PC-9 (cell line): ENCODE measurements at regions of chr11 and their contacts with region 1.

Region 1: DNA sequence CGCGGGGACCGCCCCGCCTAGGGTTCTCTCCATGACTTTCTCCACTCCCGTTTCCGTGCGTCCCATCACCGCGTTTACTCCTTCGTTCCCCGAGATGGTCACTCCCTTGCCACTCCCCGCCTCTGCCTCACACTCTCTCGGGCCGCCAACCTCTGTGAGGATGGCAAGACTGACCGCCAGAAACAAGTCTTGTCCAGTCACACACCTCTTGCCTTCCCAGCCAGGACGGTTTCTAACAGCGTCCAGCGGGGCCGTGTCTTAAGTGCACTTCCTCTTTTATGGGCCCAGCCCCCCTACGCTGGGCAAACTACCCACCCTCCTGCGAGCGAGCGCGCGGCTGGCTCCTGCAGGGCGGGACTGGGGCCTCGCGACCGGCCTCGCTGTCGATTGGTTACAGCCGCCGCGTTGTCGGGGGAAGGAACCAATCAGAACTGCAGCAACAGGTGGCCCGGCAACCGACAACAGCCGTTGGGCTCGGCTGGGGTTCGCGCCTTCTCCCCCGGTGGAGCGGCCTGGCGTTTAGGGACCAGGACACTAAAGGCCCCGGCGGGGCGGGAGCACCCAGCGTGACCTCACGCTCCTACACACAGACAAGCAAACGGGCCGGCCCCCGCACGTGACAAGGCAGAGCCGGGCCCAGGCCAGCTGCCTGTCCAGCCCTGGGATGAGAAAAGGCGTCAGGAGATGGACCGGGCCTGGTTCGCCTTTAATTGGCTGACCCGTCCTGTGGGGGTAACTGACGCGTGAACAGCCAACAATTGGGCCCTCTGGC is 512 bp upstream of the UCP2 start:
- DNase-seq: peak; percentile 90 to 96
- H3K4me3 ChIP-seq: peak overlapping the region; percentile 70
- H3K27ac ChIP-seq: peak overlapping the region; percentile 73
- H3K4me1 ChIP-seq: peaks cover 36% of the 10 kb centered on the region
- H3K27me3 ChIP-seq: no peaks in the 10 kb centered on the region
- CTCF ChIP-seq: no peak

Region 2: DNA sequence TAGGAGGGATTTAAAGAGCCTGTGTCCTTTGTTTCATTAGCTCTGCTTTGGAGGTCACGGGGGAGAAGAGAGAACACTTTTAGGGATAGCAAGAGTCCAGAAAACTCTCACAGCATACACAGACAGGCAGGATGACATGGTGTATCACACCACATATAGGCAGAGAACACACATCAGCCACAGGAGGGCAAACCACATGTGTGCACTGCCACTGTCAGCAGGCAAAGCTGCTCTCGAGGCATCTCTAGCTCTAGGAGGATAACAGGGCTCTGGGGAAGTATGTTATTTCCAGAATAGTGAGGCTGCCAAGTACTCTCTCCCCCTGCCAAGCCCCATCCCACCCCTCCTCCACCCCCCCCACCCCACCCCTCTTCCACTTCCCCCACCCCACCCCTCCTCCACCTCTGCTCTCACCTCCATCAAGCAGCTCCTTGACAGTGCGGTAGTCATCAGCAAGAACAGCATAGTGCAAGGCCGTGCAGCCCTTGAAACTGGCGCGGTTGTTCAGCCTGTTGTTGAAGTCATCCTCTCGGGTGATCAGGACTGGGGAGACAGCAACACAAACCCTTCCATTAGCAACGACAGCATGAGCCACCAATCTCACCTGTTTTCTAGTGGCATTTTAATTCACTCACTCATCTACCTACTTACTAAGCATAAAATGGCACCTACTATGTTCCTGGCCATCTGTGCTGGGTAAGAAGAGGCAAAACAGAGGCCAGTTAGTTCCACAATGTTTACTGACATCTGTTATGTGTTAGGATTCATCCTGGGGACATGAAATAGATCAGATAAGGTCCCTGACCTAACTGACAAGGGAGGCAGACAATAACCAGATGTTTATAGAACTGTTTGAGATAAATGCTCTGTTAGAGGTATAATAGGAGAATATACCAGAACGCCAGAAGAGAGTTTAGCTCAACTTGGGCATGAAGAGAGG is 1624.4 kb before region 1 on chr11:
- CTCF ChIA-PET with region 1: no interaction called
- POLR2A ChIA-PET with region 1: no interaction called
- intact Hi-C with region 1: no loop called
- DNase-seq: no peak
- H3K4me3 ChIP-seq: no peak overlapping the region
- H3K27ac ChIP-seq: no peak overlapping the region
- H3K4me1 ChIP-seq: no peaks in the 10 kb centered on the region
- H3K27me3 ChIP-seq: no peaks in the 10 kb centered on the region
- CTCF ChIP-seq: no peak

Region 3: GRCh38 chr11:74024261-74025029 is 41.3 kb after region 1 on chr11:
- CTCF ChIA-PET with region 1: no interaction called
- POLR2A ChIA-PET with region 1: interaction called, 18 read pairs
- intact Hi-C with region 1: loop called (anchors 5 kb)
- DNase-seq: no peak
- H3K4me3 ChIP-seq: no peak overlapping the region
- H3K27ac ChIP-seq: peak overlapping the region; percentile 68
- H3K4me1 ChIP-seq: peaks cover 52% of the 10 kb centered on the region
- H3K27me3 ChIP-seq: no peaks in the 10 kb centered on the region
- CTCF ChIP-seq: no peak

Region 4: DNA sequence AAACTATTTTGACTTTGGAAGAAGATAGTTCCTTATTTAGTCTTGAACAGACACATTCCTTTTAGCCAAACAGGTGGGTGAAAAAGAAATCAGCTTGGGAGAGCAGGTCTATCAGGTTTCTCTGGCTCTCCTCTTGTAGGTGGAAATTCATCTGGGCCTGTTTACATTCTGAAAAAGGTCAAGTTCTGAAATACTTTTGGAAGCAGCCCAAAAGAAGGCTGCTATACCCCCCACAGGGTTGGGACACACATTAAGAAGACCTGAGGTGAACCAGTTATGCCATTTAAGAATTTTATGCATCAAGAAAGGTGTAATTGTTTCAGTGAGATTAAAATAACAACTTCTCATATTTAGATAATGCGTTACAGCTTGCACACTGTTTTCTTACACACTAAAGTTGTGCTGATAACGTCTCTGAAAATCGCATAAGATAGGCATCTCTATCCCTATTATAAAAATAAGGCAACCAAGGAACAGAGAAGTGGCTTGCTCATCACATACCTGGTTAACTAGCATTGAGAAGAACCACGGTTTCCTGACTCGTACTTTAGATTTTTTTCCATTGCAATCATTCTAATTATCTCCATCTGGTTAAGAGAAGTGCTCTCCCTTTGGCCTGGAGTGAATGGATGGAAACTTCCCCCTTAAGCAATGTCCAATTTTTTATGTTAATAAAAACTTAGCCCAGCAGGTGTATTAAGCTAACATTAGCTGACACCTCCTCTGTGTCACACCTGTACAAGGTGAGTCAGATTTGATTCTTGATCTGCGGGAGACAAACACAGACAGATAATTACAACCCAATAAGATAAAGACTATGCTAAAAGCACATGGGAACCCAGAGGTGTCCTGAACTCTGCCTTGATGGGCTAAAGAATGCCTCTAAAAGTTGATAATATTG is 86.2 kb after region 1 on chr11:
- CTCF ChIA-PET with region 1: no interaction called
- POLR2A ChIA-PET with region 1: interaction called, 9 read pairs
- intact Hi-C with region 1: loop called (anchors 1 kb)
- DNase-seq: peak; percentile 69 to 100
- H3K4me3 ChIP-seq: peak overlapping the region; percentile 11; the same call in 1 of the 2 replicates
- H3K27ac ChIP-seq: peak overlapping the region; percentile 94
- H3K4me1 ChIP-seq: peaks cover 75% of the 10 kb centered on the region
- H3K27me3 ChIP-seq: no peaks in the 10 kb centered on the region
- CTCF ChIP-seq: no peak

Region 5: GRCh38 chr11:74090701-74091100 is 107.5 kb after region 1 on chr11:
- CTCF ChIA-PET with region 1: no interaction called
- POLR2A ChIA-PET with region 1: no interaction called
- intact Hi-C with region 1: loop called (anchors 5 kb)
- DNase-seq: no peak
- H3K4me3 ChIP-seq: no peak overlapping the region
- H3K27ac ChIP-seq: no peak overlapping the region
- H3K4me1 ChIP-seq: peaks cover 4% of the 10 kb centered on the region
- H3K27me3 ChIP-seq: no peaks in the 10 kb centered on the region
- CTCF ChIP-seq: peak; percentile 59

Region 6: GRCh38 chr11:74147199-74147929 is 164.2 kb after region 1 on chr11:
- CTCF ChIA-PET with region 1: no interaction called
- POLR2A ChIA-PET with region 1: no interaction called
- intact Hi-C with region 1: no loop called
- DNase-seq: peak; percentile 56 to 82
- H3K4me3 ChIP-seq: no peak overlapping the region
- H3K27ac ChIP-seq: peak overlapping the region; percentile 35
- H3K4me1 ChIP-seq: peaks cover 21% of the 10 kb centered on the region
- H3K27me3 ChIP-seq: no peaks in the 10 kb centered on the region
- CTCF ChIP-seq: no peak

Region 7: GRCh38 chr11:74237541-74237940 is 254.4 kb after region 1 on chr11:
- CTCF ChIA-PET with region 1: no interaction called
- POLR2A ChIA-PET with region 1: interaction called, 24 read pairs
- intact Hi-C with region 1: no loop called
- DNase-seq: no peak
- H3K4me3 ChIP-seq: no peak overlapping the region
- H3K27ac ChIP-seq: no peak overlapping the region
- H3K4me1 ChIP-seq: no peaks in the 10 kb centered on the region
- H3K27me3 ChIP-seq: no peaks in the 10 kb centered on the region
- CTCF ChIP-seq: no peak